ENCODE measurements at regions of chr12 and their contacts with region 1.

Region 1: DNA sequence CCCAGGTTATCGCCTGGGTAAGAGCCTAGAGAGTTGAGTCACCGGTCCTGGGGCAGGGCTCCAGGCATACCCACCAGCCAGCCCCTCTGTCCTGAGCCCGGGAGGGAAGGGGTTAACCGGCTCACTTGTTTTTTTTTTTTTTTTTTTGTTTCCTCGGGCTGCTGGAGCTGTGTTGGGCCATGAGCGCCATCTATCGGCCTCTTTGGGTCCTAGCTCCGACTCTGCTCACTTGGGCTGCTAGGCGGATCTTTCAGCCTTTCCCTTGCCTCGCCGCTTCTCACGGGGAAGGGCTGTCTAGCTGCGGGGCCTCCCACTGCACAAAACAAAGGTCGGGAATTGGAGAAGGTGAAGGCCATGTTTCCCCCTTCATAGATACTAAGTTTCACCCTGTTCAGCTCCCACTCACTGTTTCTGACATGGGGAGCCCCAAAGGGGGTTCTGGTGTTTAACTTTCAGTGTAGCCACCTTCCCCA is 2.8 kb upstream of the SMUG1 start:
- DNase-seq: peak; percentile 61
- H3K4me3 ChIP-seq: no peak overlapping the region
- H3K27ac ChIP-seq: no peak overlapping the region
- H3K4me1 ChIP-seq: peaks cover 12% of the 10 kb centered on the region
- H3K27me3 ChIP-seq: no peaks in the 10 kb centered on the region
- CTCF ChIP-seq: peak; percentile 84 to 90

Region 2: DNA sequence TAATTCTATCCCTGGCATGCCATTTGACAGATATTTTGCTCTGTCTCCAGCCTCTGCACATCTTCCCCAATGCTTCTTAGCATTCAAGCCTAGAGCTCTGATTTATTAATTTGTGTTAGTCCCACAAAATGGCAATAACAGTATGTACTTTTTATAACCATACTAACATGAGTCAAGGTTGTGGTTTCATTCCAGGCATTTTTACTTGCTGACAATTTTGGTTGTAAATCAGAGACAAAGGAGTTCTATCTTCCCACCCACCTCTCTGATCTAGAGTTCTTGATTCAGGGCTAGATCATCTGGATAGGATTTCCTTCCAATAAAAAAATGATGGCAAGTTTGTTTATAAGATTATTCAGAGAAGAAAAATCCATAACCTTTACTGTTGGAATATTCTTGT is 421.3 kb before region 1 on chr12:
- CTCF ChIA-PET with region 1: no interaction called
- dilution Hi-C with region 1: loop called (anchors 10 kb)
- in situ Hi-C with region 1: no loop called
- intact Hi-C with region 1: loop called (anchors 5 kb)
- DNase-seq: peak; percentile 93
- H3K4me3 ChIP-seq: no peak overlapping the region
- H3K27ac ChIP-seq: peak overlapping the region; percentile 57
- H3K4me1 ChIP-seq: peaks cover 35% of the 10 kb centered on the region
- H3K27me3 ChIP-seq: no peaks in the 10 kb centered on the region
- CTCF ChIP-seq: no peak

Region 3: DNA sequence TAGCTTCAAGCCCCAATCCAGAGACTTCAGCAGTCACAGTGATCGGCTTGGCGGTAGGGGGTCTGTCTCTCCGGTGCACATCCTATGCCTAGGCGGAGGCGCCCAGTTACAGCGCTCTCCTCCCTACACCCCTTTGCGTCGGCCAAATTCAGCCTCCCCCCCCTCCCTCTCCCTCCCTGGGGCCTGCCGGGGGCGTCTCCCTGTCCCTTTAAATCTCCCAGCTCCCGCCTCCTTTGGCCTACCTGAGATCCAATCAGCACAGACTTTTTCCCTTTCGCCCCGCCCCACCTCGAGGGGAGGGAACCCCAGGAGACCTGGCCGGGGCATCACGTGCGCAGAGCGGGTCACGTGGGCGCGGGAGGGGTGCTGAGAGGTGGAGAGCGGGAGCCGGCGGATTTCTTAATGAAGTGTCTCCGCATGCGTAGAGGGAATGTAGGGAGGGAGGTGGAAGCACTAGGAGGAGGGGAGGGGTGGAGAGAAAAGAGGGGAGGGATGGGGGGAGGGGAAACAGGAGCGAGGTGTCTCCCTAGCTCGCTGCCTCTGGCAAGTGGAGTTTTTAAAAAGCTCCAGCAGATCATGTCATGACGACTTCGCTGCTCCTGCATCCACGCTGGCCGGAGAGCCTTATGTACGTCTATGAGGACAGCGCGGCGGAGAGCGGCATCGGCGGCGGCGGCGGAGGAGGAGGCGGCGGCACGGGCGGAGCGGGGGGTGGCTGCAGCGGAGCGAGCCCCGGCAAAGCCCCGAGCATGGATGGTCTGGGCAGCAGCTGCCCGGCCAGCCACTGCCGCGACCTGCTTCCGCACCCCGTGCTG is 253.1 kb before region 1 on chr12 and contains the start of gene HOXC13:
- CTCF ChIA-PET with region 1: interaction called, 15 read pairs
- dilution Hi-C with region 1: no loop called
- in situ Hi-C with region 1: no loop called
- intact Hi-C with region 1: no loop called
- DNase-seq: peak; percentile 100
- H3K4me3 ChIP-seq: peak within 1 kb of the TSS; percentile 73 to 89 (median 88)
- H3K27ac ChIP-seq: peak within 1 kb of the TSS; percentile 40
- H3K4me1 ChIP-seq: peaks cover 15% of the 10 kb centered on the region
- H3K27me3 ChIP-seq: no peaks in the 10 kb centered on the region
- CTCF ChIP-seq: no peak
- total RNA-seq, gene HOXC13: 10.2 to 15.7 TPM

Region 4: DNA sequence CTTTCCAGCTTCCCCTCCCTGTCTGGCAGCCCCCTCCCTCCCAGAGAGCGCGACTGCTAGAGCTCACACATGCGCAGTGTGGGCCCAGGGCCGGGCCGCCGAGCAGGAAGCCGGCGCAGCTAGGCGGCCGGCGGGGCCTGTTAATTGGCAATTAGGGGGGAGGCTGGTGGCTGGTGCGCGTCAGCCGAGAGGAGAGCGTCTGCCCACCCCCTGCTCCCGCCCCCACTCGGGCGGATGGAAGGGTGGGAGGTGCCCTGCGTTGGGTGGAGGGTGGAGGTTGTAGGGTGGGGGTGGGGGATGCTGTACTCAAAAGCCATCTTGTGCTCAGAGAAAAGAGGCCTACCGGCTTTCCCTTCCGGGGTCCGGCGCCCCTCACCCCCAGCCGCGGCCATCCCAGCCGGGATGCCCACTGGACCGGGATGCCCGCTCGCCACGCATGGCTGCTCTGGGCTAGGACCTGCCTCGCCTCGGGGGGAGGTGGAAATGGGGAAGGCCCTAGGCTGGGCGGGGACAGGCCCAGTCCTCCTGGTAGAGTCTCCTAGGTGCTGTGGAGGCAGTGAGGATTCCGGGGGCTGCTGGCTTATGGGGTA is 173.6 kb before region 1 on chr12:
- CTCF ChIA-PET with region 1: no interaction called
- dilution Hi-C with region 1: loop called (anchors 5 kb)
- in situ Hi-C with region 1: loop called in 1 of 2 experiments (anchors 5 kb)
- intact Hi-C with region 1: no loop called
- DNase-seq: peak; percentile 93
- H3K4me3 ChIP-seq: peak overlapping the region; percentile 63 to 87 (median 69)
- H3K27ac ChIP-seq: peak overlapping the region; percentile 90
- H3K4me1 ChIP-seq: peaks cover 49% of the 10 kb centered on the region
- H3K27me3 ChIP-seq: no peaks in the 10 kb centered on the region
- CTCF ChIP-seq: no peak

Region 5: DNA sequence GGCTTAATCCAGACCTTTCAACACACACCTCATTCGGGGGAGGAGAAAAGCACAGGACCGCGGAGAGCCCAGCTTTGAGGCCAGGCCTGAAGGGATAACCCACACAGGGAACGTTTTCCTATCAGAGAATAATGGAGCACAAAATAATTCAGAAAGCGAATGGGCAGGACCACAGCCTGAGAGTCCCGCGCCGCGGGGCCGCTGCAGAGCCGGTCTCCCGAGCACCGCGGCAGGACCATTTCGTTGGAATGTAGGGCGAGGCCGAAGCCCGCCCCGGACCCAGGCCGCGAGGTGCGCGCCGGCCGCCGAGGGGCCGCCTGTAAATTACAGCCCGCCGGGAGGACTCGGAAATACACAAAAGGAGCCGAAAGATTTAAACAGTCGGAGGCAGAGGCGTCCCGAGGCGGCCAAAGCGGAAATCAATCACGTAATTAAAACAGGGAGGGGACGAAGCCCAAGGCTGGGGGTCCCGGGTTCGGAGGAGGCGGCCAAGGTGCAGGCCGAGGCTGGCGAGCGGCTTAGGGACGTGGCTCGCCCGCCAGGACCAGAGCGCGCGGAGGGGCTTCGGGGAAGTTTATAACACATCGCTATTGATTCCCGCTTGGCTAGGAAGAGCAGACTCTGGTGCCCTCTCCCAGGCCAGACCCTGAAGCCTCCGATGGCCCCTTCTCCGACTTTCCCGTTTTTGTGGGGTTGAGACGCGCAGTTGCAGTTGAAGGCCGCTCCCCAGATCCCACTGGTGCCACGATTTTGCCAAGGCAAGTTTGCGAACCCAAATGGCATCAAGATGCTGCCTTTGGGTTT is 144.2 kb before region 1 on chr12:
- CTCF ChIA-PET with region 1: no interaction called
- dilution Hi-C with region 1: no loop called
- in situ Hi-C with region 1: no loop called
- intact Hi-C with region 1: no loop called
- DNase-seq: no peak
- H3K4me3 ChIP-seq: no peak overlapping the region
- H3K27ac ChIP-seq: no peak overlapping the region
- H3K4me1 ChIP-seq: peaks cover 15% of the 10 kb centered on the region
- H3K27me3 ChIP-seq: no peaks in the 10 kb centered on the region
- CTCF ChIP-seq: no peak

Region 6: GRCh38 chr12:54126696-54127537 is 64.7 kb before region 1 on chr12:
- CTCF ChIA-PET with region 1: no interaction called
- dilution Hi-C with region 1: no loop called
- in situ Hi-C with region 1: no loop called
- intact Hi-C with region 1: loop called (anchors 2 kb)
- DNase-seq: peak; percentile 36
- H3K4me3 ChIP-seq: peak overlapping the region; percentile 59 to 73 (median 63)
- H3K27ac ChIP-seq: no peak overlapping the region
- H3K4me1 ChIP-seq: peaks cover 9% of the 10 kb centered on the region
- H3K27me3 ChIP-seq: no peaks in the 10 kb centered on the region
- CTCF ChIP-seq: no peak

Region 7: GRCh38 chr12:54147186-54147585 is 44.4 kb before region 1 on chr12:
- CTCF ChIA-PET with region 1: no interaction called
- dilution Hi-C with region 1: loop called (anchors 5 kb)
- in situ Hi-C with region 1: no loop called
- intact Hi-C with region 1: no loop called
- DNase-seq: no peak
- H3K4me3 ChIP-seq: no peak overlapping the region
- H3K27ac ChIP-seq: no peak overlapping the region
- H3K4me1 ChIP-seq: no peaks in the 10 kb centered on the region
- H3K27me3 ChIP-seq: no peaks in the 10 kb centered on the region
- CTCF ChIP-seq: no peak

Region 8: GRCh38 chr12:54239620-54240019 is 48.0 kb after region 1 on chr12:
- CTCF ChIA-PET with region 1: no interaction called
- dilution Hi-C with region 1: loop called (anchors 5 kb)
- in situ Hi-C with region 1: no loop called
- intact Hi-C with region 1: no loop called
- DNase-seq: no peak
- H3K4me3 ChIP-seq: no peak overlapping the region
- H3K27ac ChIP-seq: no peak overlapping the region
- H3K4me1 ChIP-seq: peaks cover 26% of the 10 kb centered on the region
- H3K27me3 ChIP-seq: no peaks in the 10 kb centered on the region
- CTCF ChIP-seq: no peak